GM10248 (cell line): ENCODE measurements at regions of chr1 and their contacts with region 1.

Region 1: GRCh38 chr1:225999227-225999911 is at the start of gene SDE2:
- DNase-seq: peak; percentile 97
- CTCF ChIP-seq: no peak

Region 2: DNA sequence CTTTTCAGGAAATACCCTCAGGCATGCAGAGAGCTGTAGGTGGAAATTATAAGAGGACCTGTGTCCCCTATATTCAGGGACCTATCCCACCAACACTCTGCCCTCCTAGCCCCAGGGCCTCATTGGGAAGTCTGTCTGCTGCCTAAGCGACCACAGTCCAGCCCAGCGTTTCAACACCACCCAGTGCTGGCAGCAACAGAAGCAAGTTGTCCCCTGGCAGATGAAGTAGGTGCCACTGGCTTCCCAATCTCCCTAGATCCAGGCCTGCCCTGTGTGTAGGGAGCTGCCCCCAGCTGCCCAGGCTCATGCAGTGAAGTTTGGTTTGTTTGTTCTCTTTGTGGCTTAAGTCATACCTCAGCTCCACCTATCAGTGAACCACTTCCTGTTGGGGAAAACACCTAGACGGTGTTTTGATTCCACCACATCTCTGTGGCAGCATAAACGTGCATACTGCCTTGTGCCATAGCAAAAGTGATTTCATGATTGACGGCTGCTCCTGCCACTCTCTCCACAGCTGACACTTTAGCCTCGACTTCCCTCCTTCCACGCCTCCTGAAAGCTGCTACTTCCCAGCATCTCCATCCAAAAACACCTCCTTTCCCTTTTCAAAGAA is 102.3 kb before region 1 on chr1:
- CTCF ChIA-PET with region 1: no interaction called
- POLR2A ChIA-PET with region 1: no interaction called
- DNase-seq: peak; percentile 93
- CTCF ChIP-seq: no peak

Region 3: GRCh38 chr1:225977937-225978748 is 21.2 kb before region 1 on chr1:
- CTCF ChIA-PET with region 1: interaction called, 4 read pairs
- POLR2A ChIA-PET with region 1: interaction called, 11 read pairs
- DNase-seq: peak; percentile 67
- CTCF ChIP-seq: peak; percentile 26

Region 4: GRCh38 chr1:225987491-225988316 is 11.7 kb before region 1 on chr1:
- CTCF ChIA-PET with region 1: interaction called, 38 read pairs
- POLR2A ChIA-PET with region 1: interaction called, 6 read pairs
- DNase-seq: no peak
- CTCF ChIP-seq: peak; percentile 60

Region 5: GRCh38 chr1:226029093-226029496 is 29.7 kb after region 1 on chr1:
- CTCF ChIA-PET with region 1: interaction called, 5 read pairs
- POLR2A ChIA-PET with region 1: interaction called, 15 read pairs
- DNase-seq: peak; percentile 64
- CTCF ChIP-seq: no peak

Region 6: GRCh38 chr1:226083302-226084101 is 84.1 kb after region 1 on chr1:
- CTCF ChIA-PET with region 1: no interaction called
- POLR2A ChIA-PET with region 1: interaction called, 10 read pairs
- DNase-seq: peak; percentile 97
- CTCF ChIP-seq: no peak

Region 7: GRCh38 chr1:226201029-226201593 is 201.7 kb after region 1 on chr1:
- CTCF ChIA-PET with region 1: no interaction called
- POLR2A ChIA-PET with region 1: no interaction called
- DNase-seq: peak; percentile 71
- CTCF ChIP-seq: peak; percentile 61